IMR-90 (cell line): ENCODE measurements at regions of chr7 and their contacts with region 1.

Region 1: GRCh38 chr7:151110941-151111645 is 24.8 kb downstream of the AGAP3 start:
- DNase-seq: peak; percentile 65
- ATAC-seq: peak; percentile 48
- H3K4me3 ChIP-seq: no peak overlapping the region
- H3K27ac ChIP-seq: no peak overlapping the region
- H3K4me1 ChIP-seq: peaks cover 24% of the 10 kb centered on the region
- H3K27me3 ChIP-seq: no peaks in the 10 kb centered on the region
- CTCF ChIP-seq: peak; percentile 89
- POLR2A ChIP-seq: no peak
- RAD21 ChIP-seq: peak; percentile 90

Region 2: DNA sequence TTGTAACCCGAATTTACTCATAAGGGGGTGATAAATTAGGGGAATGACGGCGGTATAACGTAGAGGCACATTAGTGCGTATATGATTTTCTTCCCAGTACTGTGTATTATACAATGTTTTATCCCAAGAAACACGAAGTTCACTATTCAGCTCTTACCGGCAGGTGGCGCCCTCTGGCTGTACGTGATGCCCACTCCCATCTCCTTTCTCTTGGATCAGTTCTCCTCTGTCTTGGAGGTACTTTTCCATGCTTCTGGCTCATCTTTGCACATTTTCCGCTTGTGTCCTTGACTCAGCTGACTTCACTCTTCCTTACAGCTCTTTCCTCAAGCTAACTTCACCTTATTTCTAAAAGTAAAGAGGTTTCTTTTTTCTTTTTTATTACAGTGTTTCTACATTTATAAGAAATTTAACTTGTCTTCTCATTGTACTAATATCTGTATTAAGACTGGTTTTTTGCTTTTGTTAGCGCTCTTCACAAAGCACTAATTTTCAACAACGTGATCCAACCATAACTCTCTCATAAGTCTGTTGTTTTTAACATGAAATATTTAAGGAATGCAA is 332.3 kb before region 1 on chr7:
- CTCF ChIA-PET with region 1: no interaction called
- POLR2A ChIA-PET with region 1: no interaction called
- dilution Hi-C with region 1: no loop called
- in situ Hi-C with region 1: loop called (anchors 25 kb)
- intact Hi-C with region 1: loop called (anchors 2 kb)
- DNase-seq: peak; percentile 66
- ATAC-seq: peak; percentile 76
- H3K4me3 ChIP-seq: no peak overlapping the region
- H3K27ac ChIP-seq: no peak overlapping the region
- H3K4me1 ChIP-seq: peaks cover 16% of the 10 kb centered on the region
- H3K27me3 ChIP-seq: no peaks in the 10 kb centered on the region
- CTCF ChIP-seq: peak; percentile 87
- POLR2A ChIP-seq: no peak
- RAD21 ChIP-seq: peak; percentile 76

Region 3: DNA sequence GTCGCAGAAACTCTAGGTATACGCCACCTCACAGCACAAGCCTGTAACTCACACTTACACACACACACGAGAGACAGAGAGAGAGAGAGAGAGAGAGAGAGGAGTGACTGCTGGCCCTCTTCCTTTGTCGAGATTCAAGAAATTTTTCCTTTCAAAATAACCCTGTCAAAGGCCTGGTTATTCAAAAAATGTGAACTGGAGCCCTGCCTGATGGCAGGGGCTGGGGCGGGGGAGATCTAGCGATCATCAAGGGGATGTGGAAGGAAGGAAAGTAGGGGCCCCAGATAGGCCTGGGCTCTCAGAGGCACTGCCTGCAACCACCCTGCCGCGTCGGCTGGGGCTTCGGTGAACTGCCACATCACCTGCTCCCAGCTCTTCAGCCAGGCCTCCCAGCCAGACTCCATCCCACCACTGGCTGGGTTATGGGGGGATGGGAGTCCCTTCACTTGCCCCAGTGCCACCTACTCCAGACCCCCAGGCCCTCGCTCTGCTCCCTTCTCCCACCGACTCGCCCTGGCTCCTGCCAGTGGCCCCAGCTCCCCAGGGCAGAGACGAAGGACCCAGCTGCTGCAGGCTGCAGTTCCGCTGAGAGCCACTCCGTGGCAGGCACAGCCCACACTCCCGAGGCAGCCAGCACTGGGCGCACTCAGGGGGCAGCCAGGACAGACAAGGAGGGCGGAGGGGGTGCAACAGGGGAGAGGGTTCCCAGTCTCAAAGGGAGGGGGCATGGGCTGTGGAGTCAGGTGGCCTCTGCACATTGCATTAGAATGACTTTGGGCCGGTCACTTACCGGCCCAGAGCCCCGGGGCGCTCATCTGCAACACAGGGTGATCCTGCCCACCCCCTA is 148.3 kb before region 1 on chr7:
- CTCF ChIA-PET with region 1: no interaction called
- POLR2A ChIA-PET with region 1: no interaction called
- dilution Hi-C with region 1: no loop called
- in situ Hi-C with region 1: no loop called
- intact Hi-C with region 1: loop called (anchors 2 kb)
- DNase-seq: peak; percentile 37
- ATAC-seq: peak; percentile 91
- H3K4me3 ChIP-seq: no peak overlapping the region
- H3K27ac ChIP-seq: peak overlapping the region; percentile 79
- H3K4me1 ChIP-seq: peaks cover 13% of the 10 kb centered on the region; the same call in 1 of the 2 replicates
- H3K27me3 ChIP-seq: no peaks in the 10 kb centered on the region; the same call in 1 of the 2 replicates
- CTCF ChIP-seq: peak; percentile 90
- POLR2A ChIP-seq: no peak
- RAD21 ChIP-seq: peak; percentile 90

Region 4: GRCh38 chr7:151028131-151028947 is 82.8 kb before region 1 on chr7 and contains the start of gene ABCB8:
- CTCF ChIA-PET with region 1: interaction called, 3 read pairs
- POLR2A ChIA-PET with region 1: no interaction called
- dilution Hi-C with region 1: no loop called
- in situ Hi-C with region 1: loop called (anchors 5 kb)
- intact Hi-C with region 1: loop called (anchors 1 kb)
- DNase-seq: peak; percentile 98
- ATAC-seq: peak; percentile 96
- H3K4me3 ChIP-seq: peak within 1 kb of the TSS; percentile 71
- H3K27ac ChIP-seq: peak within 1 kb of the TSS; percentile 65
- H3K4me1 ChIP-seq: no peaks in the 10 kb centered on the region
- H3K27me3 ChIP-seq: peaks cover 4% of the 10 kb centered on the region
- CTCF ChIP-seq: peak; percentile 44
- POLR2A ChIP-seq: peak; percentile 85
- RAD21 ChIP-seq: peak; percentile 33
- total RNA-seq, gene ABCB8: 14.7 and 16.3 TPM in 2 replicates

Region 5: DNA sequence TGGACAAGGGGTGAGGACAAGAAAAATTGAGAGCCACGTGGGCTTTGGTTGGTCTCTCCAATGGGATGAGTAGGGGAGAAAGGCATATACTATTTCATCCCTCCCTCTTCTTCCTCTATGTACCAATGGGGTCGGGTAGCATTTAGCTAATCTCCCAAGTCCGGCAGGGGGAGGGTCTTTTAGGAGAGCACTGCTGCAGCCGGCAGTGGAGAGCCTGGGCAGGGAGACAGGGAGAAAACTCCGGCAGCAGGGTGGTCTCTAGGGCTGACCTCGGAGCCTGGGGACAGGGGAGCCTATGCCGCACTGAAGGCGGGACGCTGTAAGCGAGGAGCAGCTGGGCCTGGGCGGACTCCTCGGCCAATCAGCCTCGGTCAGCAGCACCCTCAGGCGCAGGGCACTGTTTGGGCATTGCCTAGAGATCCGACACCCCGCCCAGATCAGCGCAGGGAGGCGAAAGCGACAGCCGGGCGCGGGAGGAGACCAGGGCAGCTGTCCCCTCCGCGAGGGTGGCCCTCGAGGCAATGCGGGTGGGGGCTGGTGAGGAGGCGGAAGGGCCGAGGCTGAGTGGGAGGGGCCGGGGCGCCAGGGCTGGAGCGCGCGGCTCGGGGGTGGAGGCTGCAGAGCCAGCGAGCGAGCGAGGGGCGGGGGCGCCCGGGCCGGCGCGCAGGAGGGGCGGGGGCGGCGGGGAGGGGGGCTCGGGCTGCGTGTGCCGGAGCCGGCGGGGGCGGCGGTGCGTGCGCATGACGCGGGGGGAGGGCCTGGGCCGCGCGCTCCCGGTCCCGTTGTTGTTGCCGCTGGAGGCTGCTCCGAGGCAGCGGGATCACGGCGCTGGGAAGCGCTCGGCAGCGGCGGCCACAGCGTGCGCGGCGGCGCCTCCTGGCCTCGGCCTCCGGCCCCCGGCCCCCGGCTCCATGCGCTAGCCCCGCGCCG is 25.1 kb before region 1 on chr7 and contains the start of gene AGAP3:
- CTCF ChIA-PET with region 1: interaction called, 7 read pairs
- POLR2A ChIA-PET with region 1: interaction called, 5 read pairs
- dilution Hi-C with region 1: no loop called
- in situ Hi-C with region 1: no loop called
- intact Hi-C with region 1: loop called (anchors 1 kb)
- DNase-seq: peak; percentile 70
- ATAC-seq: peak; percentile 60
- H3K4me3 ChIP-seq: peak within 1 kb of the TSS; percentile 86
- H3K27ac ChIP-seq: peak within 1 kb of the TSS; percentile 98
- H3K4me1 ChIP-seq: peaks cover 35% of the 10 kb centered on the region
- H3K27me3 ChIP-seq: no peaks in the 10 kb centered on the region
- CTCF ChIP-seq: no peak
- POLR2A ChIP-seq: peak; percentile 61
- RAD21 ChIP-seq: no peak
- total RNA-seq, gene AGAP3: 33.3 and 35.3 TPM in 2 replicates